IMR-90 (cell line): ENCODE measurements at regions of chr21 and their contacts with region 1.

Region 1: DNA sequence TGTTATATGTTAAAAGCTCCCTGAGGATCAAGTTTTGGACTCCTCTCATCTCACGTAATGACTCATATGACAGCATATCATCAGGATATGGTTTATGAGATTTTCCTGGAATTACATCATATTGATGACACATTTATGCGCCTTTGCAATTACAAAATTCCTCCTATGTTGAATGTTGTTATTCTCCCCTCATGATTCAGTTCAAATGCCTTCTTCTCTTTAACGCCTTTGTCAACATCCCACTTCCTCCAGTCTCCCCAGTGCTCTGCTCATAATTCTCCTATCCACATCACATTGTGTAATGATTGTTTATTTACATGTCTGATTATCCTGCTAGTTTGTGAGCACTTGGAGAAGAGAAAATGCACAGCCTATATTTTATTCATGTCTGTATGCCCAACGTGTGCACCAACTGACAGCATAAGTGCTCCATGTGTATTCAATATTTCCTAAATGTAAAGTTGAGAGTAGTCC is 80.9 kb upstream of the BACH1 start:
- DNase-seq: peak; percentile 99
- ATAC-seq: peak; percentile 73
- H3K4me3 ChIP-seq: no peak overlapping the region
- H3K27ac ChIP-seq: peak overlapping the region; percentile 5; the same call in 1 of the 2 replicates
- H3K4me1 ChIP-seq: peaks cover 10% of the 10 kb centered on the region
- H3K27me3 ChIP-seq: no peaks in the 10 kb centered on the region
- CTCF ChIP-seq: no peak
- POLR2A ChIP-seq: no peak
- RAD21 ChIP-seq: no peak

Region 2: DNA sequence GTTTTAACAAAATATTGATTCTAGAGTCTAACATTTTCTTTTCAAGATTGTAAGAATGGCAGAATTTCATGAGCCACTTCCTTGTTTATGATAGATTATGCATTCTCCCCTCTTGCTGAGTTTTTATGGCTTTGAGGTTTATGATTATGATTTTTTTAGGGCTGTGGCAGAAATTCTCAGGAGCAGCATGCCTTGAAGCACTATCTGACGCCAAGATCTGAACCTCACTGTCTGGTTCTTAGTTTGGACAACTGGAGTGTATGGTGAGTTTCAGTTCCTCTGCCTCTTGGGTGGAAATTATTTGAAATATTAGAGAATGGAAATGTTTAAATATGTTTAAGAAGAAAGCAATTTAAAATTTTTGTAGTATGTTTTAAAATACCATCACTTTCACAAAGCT is 183.2 kb before region 1 on chr21:
- CTCF ChIA-PET with region 1: no interaction called
- POLR2A ChIA-PET with region 1: no interaction called
- dilution Hi-C with region 1: no loop called
- in situ Hi-C with region 1: no loop called
- intact Hi-C with region 1: no loop called
- DNase-seq: no peak
- ATAC-seq: no peak
- H3K4me3 ChIP-seq: no peak overlapping the region
- H3K27ac ChIP-seq: no peak overlapping the region
- H3K4me1 ChIP-seq: no peaks in the 10 kb centered on the region
- H3K27me3 ChIP-seq: no peaks in the 10 kb centered on the region
- CTCF ChIP-seq: no peak
- POLR2A ChIP-seq: no peak
- RAD21 ChIP-seq: no peak

Region 3: DNA sequence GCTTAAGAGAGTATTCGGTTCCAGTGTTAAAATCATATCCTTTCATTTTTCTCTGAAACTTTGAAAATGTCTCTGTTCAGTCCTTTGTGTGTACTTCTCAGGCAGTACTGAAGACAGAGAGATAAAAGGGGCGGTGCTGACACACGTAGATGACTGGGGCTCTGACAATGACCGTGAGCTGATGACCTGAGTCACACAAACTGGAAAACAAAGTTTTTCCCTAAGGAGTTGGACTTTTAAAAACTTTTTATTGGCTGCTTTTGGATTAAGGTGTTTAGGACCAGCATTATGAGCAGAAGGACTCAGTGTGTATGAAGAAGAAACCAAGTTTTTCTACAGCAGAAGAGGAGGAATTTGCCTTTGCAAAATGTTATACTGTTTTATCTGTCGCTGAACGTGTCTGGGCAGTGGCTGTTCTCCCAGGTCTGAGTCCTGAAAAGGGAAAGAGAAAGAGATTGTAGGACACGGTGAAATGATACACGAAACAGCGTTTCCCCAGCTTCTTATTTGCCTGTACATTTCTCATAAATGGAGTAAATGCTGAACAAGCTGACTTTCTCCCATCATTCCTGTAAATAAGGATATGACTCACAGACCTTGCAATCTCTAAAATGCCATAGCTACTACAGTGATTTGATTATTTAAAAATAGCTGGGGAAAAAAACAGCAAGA is 35.9 kb before region 1 on chr21:
- CTCF ChIA-PET with region 1: no interaction called
- POLR2A ChIA-PET with region 1: no interaction called
- dilution Hi-C with region 1: no loop called
- in situ Hi-C with region 1: no loop called
- intact Hi-C with region 1: loop called (anchors 5 kb)
- DNase-seq: peak; percentile 95
- ATAC-seq: peak; percentile 86
- H3K4me3 ChIP-seq: peak overlapping the region; percentile 50
- H3K27ac ChIP-seq: peak overlapping the region; percentile 99
- H3K4me1 ChIP-seq: peaks cover 20% of the 10 kb centered on the region
- H3K27me3 ChIP-seq: no peaks in the 10 kb centered on the region
- CTCF ChIP-seq: no peak
- POLR2A ChIP-seq: peak; percentile 89
- RAD21 ChIP-seq: no peak

Region 4: GRCh38 chr21:29258626-29259335 is 40.9 kb after region 1 on chr21:
- CTCF ChIA-PET with region 1: no interaction called
- POLR2A ChIA-PET with region 1: no interaction called
- dilution Hi-C with region 1: no loop called
- in situ Hi-C with region 1: no loop called
- intact Hi-C with region 1: loop called (anchors 5 kb)
- DNase-seq: peak; percentile 89
- ATAC-seq: peak; percentile 87
- H3K4me3 ChIP-seq: no peak overlapping the region
- H3K27ac ChIP-seq: peak overlapping the region; percentile 91
- H3K4me1 ChIP-seq: peaks cover 8% of the 10 kb centered on the region
- H3K27me3 ChIP-seq: no peaks in the 10 kb centered on the region
- CTCF ChIP-seq: no peak
- POLR2A ChIP-seq: no peak
- RAD21 ChIP-seq: no peak